ENCODE measurements at regions of chr16 and their contacts with region 1.

Region 1: GRCh38 chr16:1152123-1152638 is 725 bp upstream of the CACNA1H start:
- DNase-seq: peak; percentile 69
- ATAC-seq: peak; percentile 54
- H3K4me3 ChIP-seq: peak overlapping the region in 3 of 5 experiments; percentile 19 to 30 (median 25)
- H3K4me3 Mint-ChIP-seq: peak overlapping the region; percentile 71
- H3K27ac ChIP-seq: no peak overlapping the region
- H3K27ac Mint-ChIP-seq: peak overlapping the region; percentile 15
- H3K4me1 ChIP-seq: peaks cover 14 to 17% of the 10 kb centered on the region in 2 donors
- H3K4me1 Mint-ChIP-seq: peaks cover 3% of the 10 kb centered on the region
- H3K27me3 ChIP-seq: peaks cover 0 to 37% (median 15%) of the 10 kb centered on the region in 4 experiments
- H3K27me3 Mint-ChIP-seq: peaks cover 7% of the 10 kb centered on the region
- CTCF ChIP-seq: no peak

Region 2: DNA sequence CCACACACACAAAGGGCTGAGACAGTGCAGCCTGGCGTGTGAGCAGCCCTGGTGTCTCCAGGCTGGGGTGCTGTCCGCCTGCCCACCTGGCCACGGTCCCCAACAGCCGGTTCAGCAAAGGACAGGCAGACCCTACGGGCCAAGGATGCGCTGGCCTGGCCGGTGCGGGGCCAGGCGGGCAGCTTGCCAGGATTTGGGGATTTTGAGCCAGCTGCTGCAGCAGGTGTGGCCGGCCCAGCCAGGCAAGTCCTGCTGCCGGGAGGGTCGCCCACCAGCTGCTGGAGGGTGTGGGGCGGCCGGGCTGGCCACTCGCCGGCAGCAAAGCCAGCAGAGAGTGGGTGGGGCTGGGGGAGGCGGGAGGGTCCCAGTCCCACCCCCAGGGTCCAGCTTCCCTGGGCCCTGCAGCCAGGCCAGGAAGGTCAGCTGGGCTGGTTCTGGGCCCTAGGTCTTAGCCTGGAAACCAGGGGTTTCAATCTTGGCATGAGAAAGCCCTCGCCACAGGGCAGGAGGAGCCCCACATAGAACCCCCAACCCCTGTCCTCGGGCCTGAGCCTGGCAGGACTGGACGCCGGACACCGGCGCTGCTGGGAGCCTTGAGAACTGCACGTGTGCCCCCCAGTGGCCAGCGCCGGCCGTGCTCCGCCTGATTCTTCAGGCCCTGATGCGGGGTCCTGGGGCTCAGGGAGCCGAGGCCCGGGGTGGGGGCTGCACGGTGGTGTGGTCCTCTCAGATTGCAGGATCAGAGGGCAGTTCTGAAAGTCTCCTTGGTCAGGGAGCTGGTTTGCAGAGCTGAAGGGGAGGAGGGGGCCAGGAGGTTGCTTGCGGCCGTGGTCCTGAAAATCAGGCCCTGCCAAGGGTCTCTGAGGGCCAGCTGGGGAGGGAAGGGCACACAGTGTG is 97.3 kb before region 1 on chr16:
- CTCF ChIA-PET with region 1: no interaction called
- POLR2A ChIA-PET with region 1: no interaction called
- intact Hi-C with region 1: no loop called
- DNase-seq: no peak
- ATAC-seq: no peak
- H3K4me3 ChIP-seq: no peak overlapping the region
- H3K4me3 Mint-ChIP-seq: no peak overlapping the region
- H3K27ac ChIP-seq: no peak overlapping the region
- H3K27ac Mint-ChIP-seq: no peak overlapping the region
- H3K4me1 ChIP-seq: no peaks in the 10 kb centered on the region
- H3K4me1 Mint-ChIP-seq: no peaks in the 10 kb centered on the region
- H3K27me3 ChIP-seq: peaks cover 0 to 21% (median 0%) of the 10 kb centered on the region in 4 experiments
- H3K27me3 Mint-ChIP-seq: peaks cover 4% of the 10 kb centered on the region
- CTCF ChIP-seq: no peak

Region 3: GRCh38 chr16:1174477-1175362 is 22.5 kb after region 1 on chr16:
- CTCF ChIA-PET with region 1: no interaction called
- POLR2A ChIA-PET with region 1: no interaction called
- intact Hi-C with region 1: no loop called
- DNase-seq: no peak
- ATAC-seq: no peak
- H3K4me3 ChIP-seq: no peak overlapping the region
- H3K4me3 Mint-ChIP-seq: no peak overlapping the region
- H3K27ac ChIP-seq: no peak overlapping the region
- H3K27ac Mint-ChIP-seq: no peak overlapping the region
- H3K4me1 ChIP-seq: no peaks in the 10 kb centered on the region
- H3K4me1 Mint-ChIP-seq: no peaks in the 10 kb centered on the region
- H3K27me3 ChIP-seq: no peaks in the 10 kb centered on the region
- H3K27me3 Mint-ChIP-seq: peaks cover 3% of the 10 kb centered on the region
- CTCF ChIP-seq: no peak

Region 4: DNA sequence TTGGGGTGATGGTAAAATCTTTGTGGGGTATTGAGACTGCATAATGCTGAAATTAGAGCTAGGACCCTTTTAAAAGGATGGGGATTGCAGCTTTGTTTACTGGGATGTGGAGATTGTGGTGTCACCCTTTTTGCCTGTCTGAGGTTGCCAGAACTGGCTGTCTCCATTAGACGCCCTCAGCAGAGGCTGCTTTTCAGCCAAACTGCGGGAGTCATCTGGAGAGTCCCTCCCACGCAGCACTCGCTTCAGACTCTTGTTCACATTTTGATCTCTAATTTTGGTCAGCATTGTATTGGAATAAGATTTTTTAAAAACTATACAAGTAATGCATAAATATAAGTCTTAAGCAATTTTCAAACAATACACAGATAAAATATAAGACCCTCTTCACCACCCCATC is 497.9 kb after region 1 on chr16:
- CTCF ChIA-PET with region 1: no interaction called
- POLR2A ChIA-PET with region 1: interaction called, 11 read pairs
- intact Hi-C with region 1: no loop called
- DNase-seq: no peak
- ATAC-seq: no peak
- H3K4me3 ChIP-seq: no peak overlapping the region
- H3K4me3 Mint-ChIP-seq: no peak overlapping the region
- H3K27ac ChIP-seq: no peak overlapping the region
- H3K27ac Mint-ChIP-seq: no peak overlapping the region
- H3K4me1 ChIP-seq: peaks cover 24 to 35% of the 10 kb centered on the region in 2 donors
- H3K4me1 Mint-ChIP-seq: peaks cover 30% of the 10 kb centered on the region
- H3K27me3 ChIP-seq: no peaks in the 10 kb centered on the region
- H3K27me3 Mint-ChIP-seq: no peaks in the 10 kb centered on the region
- CTCF ChIP-seq: no peak

Measured in B cell (primary cell).